Calu3 (cell line): ENCODE measurements at regions of chr3 and their contacts with region 1.

Region 1: DNA sequence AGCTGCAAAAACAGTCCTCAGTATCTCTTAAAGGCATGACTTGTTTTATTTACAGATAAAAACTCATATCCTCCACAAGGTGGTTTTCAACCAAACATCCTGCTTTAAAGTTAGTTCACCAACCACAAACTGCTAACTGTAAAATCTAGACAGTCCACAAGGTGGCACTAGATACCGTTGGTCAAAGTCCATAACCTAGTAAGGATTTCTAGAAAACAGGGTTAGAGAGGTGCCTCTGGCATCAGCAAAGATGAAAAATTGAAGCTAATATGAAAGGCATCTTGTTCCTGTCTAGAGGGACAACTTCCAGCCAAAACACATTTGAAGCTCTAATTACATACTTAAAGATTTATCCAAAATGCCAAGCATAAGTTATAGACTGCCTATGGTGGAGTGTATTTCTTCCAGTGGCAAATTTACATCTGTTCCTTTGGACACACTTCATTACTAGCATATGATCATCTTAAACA is 56.0 kb downstream of the ZMAT3 start:
- DNase-seq: peak; percentile 78
- H3K4me3 Mint-ChIP-seq: no peak overlapping the region
- H3K27ac Mint-ChIP-seq: no peak overlapping the region
- H3K4me1 Mint-ChIP-seq: peaks cover 8% of the 10 kb centered on the region
- H3K27me3 Mint-ChIP-seq: no peaks in the 10 kb centered on the region
- CTCF ChIP-seq: peak; percentile 93

Region 2: GRCh38 chr3:178930116-178930515 is 85.5 kb before region 1 on chr3:
- CTCF ChIA-PET with region 1: no interaction called
- intact Hi-C with region 1: no loop called
- DNase-seq: no peak
- H3K4me3 Mint-ChIP-seq: no peak overlapping the region
- H3K27ac Mint-ChIP-seq: no peak overlapping the region
- H3K4me1 Mint-ChIP-seq: no peaks in the 10 kb centered on the region
- H3K27me3 Mint-ChIP-seq: no peaks in the 10 kb centered on the region
- CTCF ChIP-seq: no peak

Region 3: GRCh38 chr3:179071550-179072397 is 56.2 kb after region 1 on chr3 and contains the start of gene ZMAT3:
- CTCF ChIA-PET with region 1: no interaction called
- intact Hi-C with region 1: loop called (anchors 2 kb)
- DNase-seq: peak; percentile 90
- H3K4me3 Mint-ChIP-seq: peak within 1 kb of the TSS; percentile 95
- H3K27ac Mint-ChIP-seq: peak within 1 kb of the TSS; percentile 69
- H3K4me1 Mint-ChIP-seq: peaks cover 26% of the 10 kb centered on the region
- H3K27me3 Mint-ChIP-seq: no peaks in the 10 kb centered on the region
- CTCF ChIP-seq: no peak
- total RNA-seq, gene ZMAT3: 10.5 and 12.1 TPM in 2 replicates

Region 4: GRCh38 chr3:179098388-179099077 is 82.9 kb after region 1 on chr3:
- CTCF ChIA-PET with region 1: no interaction called
- intact Hi-C with region 1: loop called (anchors 2 kb)
- DNase-seq: no peak
- H3K4me3 Mint-ChIP-seq: no peak overlapping the region
- H3K27ac Mint-ChIP-seq: no peak overlapping the region
- H3K4me1 Mint-ChIP-seq: no peaks in the 10 kb centered on the region
- H3K27me3 Mint-ChIP-seq: no peaks in the 10 kb centered on the region
- CTCF ChIP-seq: no peak